ENCODE measurements at regions of chr4 and their contacts with region 1.

Region 1: DNA sequence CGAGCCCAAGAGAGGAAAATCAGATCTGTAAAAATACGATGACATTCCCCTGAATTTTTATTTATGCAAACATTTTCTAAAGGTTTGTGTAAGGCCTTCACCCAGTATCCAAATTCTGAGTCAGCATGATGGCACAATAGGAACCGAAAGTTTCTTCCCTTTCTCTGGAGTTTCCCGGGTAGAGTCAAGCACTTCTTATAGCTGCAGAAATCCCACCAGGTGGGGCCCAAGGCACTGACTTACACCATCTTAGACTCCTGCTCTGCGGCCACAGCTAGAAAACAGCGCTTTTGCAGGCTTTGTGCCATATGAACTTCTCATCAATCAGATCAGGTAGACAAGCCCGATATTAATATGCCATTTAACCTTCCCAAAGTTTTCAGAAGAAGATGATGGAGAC is 13.4 kb downstream of the LEF1 start:
- DNase-seq: peak; percentile 59
- ATAC-seq: peak; percentile 50
- H3K4me3 Mint-ChIP-seq: peak overlapping the region; percentile 53
- H3K27ac Mint-ChIP-seq: peak overlapping the region; percentile 31
- H3K4me1 Mint-ChIP-seq: peaks cover 83% of the 10 kb centered on the region
- H3K27me3 Mint-ChIP-seq: no peaks in the 10 kb centered on the region

Region 2: GRCh38 chr4:108100827-108101226 is 54.5 kb before region 1 on chr4:
- CTCF ChIA-PET with region 1: no interaction called
- POLR2A ChIA-PET with region 1: no interaction called
- DNase-seq: no peak
- ATAC-seq: peak; percentile 47
- H3K4me3 Mint-ChIP-seq: no peak overlapping the region
- H3K27ac Mint-ChIP-seq: peak overlapping the region; percentile 48
- H3K4me1 Mint-ChIP-seq: peaks cover 85% of the 10 kb centered on the region
- H3K27me3 Mint-ChIP-seq: no peaks in the 10 kb centered on the region

Region 3: GRCh38 chr4:108118490-108118889 is 36.9 kb before region 1 on chr4:
- CTCF ChIA-PET with region 1: interaction called, 20 read pairs
- POLR2A ChIA-PET with region 1: interaction called, 9 read pairs
- DNase-seq: no peak
- ATAC-seq: peak; percentile 34
- H3K4me3 Mint-ChIP-seq: peak overlapping the region; percentile 61
- H3K27ac Mint-ChIP-seq: peak overlapping the region; percentile 84
- H3K4me1 Mint-ChIP-seq: peaks cover 86% of the 10 kb centered on the region
- H3K27me3 Mint-ChIP-seq: no peaks in the 10 kb centered on the region

Region 4: DNA sequence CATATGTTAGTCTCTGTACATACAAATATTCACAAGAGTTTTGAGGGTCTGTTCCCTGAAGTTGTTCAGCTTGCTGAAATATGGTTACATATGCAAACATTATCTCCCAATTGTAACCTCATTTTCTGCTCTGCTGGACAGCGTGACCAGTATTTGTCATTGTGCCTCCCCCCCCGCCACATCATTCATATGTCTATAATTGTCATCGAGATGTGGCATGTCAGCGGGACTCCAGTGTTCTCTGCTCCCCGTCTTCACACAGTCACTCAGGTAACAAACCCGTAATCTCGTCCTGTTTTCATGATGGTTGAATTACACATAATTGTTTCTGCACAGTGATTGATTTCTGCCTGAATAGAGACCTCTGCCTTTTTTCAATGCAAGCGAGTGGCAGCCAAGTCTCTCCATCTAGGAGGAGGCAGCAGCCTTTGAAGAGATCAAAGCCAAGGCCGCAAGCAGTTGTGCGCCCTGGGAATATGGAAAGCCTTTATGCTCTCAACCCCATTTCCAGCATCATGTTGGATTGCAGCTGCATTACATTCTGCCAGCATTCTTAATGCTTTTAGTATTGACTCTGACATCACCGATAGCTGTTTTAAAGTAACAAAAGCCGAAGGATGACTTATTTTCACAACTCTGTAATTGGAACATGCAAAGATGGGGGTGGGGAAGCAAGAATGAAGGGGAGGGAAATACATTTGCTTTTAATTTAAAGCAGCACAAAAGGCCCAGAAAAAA is 14.0 kb before region 1 on chr4:
- CTCF ChIA-PET with region 1: interaction called, 21 read pairs
- POLR2A ChIA-PET with region 1: interaction called, 8 read pairs
- DNase-seq: peak; percentile 48
- ATAC-seq: peak; percentile 11
- H3K4me3 Mint-ChIP-seq: peak overlapping the region; percentile 69
- H3K27ac Mint-ChIP-seq: peak overlapping the region; percentile 82
- H3K4me1 Mint-ChIP-seq: peaks cover 90% of the 10 kb centered on the region
- H3K27me3 Mint-ChIP-seq: no peaks in the 10 kb centered on the region